Heart right ventricle (tissue), 16 donors: ENCODE measurements at regions of chr17 and their contacts with region 1.

Region 1: GRCh38 chr17:22470411-22471175 is 778.3 kb downstream of the KCNJ18 start:
- DNase-seq: no peak
- ATAC-seq: no peak
- H3K4me3 ChIP-seq: no peak overlapping the region
- H3K27ac ChIP-seq: no peak overlapping the region
- H3K4me1 ChIP-seq: no peaks in the 10 kb centered on the region
- H3K27me3 ChIP-seq: no peaks in the 10 kb centered on the region
- CTCF ChIP-seq: no peak

Region 2: DNA sequence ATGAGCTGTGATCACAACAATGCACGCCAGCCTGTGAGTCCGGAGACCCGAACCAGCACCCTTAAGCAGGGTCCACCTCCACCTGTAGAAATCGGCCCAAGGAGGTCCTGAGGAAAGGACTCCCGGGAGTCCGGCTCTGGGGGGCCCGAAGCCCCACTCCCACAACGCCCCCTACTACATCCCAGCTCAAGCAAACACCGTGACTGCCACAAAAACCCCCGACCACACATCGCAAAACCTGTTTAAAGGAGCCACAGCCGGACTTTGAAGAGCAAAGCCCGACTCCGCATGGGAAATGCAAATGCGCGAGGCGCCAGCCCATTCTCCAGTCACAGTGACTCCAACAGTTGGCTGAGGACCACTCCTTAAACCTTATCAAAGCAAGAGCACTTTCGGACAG is 95.9 kb before region 1 on chr17:
- intact Hi-C with region 1: no loop called
- DNase-seq: no peak
- ATAC-seq: no peak
- H3K4me3 ChIP-seq: no peak overlapping the region
- H3K27ac ChIP-seq: no peak overlapping the region
- H3K4me1 ChIP-seq: no peaks in the 10 kb centered on the region
- H3K27me3 ChIP-seq: no peaks in the 10 kb centered on the region
- CTCF ChIP-seq: no peak

Region 3: DNA sequence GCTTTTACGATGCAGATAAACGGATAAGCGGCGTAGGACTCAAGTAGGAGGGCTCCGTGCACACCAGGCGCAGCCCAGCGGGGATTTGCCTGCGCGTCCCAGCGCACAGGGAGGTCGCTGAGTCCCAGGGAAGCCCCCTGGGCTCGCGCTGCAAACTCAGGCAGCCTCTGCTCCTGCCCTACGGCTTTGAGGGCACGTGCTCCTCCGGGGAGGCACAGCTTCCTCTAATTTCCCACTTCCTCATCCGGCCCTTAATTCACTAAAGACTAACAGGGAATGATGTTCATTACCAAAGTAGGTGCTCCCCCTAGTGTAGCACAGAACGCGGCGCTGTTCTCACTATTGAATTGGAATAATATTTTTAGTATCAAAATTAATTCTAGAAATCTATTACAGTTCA is 47.1 kb after region 1 on chr17:
- intact Hi-C with region 1: loop called in 1 of 10 experiments (anchors 5 kb)
- DNase-seq: no peak
- ATAC-seq: no peak
- H3K4me3 ChIP-seq: no peak overlapping the region
- H3K27ac ChIP-seq: no peak overlapping the region
- H3K4me1 ChIP-seq: no peaks in the 10 kb centered on the region
- H3K27me3 ChIP-seq: no peaks in the 10 kb centered on the region
- CTCF ChIP-seq: no peak